Breast epithelium (tissue), 4 donors: ENCODE measurements at regions of chr11 and their contacts with region 1.

Region 1: GRCh38 chr11:65150509-65151271 is 16.4 kb upstream of the SYVN1 start:
- DNase-seq: peak; percentile 97
- H3K4me3 ChIP-seq: no peak overlapping the region
- H3K27ac ChIP-seq: peak overlapping the region; percentile 86 to 90
- H3K4me1 ChIP-seq: no peaks in the 10 kb centered on the region
- H3K27me3 ChIP-seq: no peaks in the 10 kb centered on the region
- CTCF ChIP-seq: peak in 1 of 3 donors; percentile 55
- POLR2A ChIP-seq: no peak

Region 2: DNA sequence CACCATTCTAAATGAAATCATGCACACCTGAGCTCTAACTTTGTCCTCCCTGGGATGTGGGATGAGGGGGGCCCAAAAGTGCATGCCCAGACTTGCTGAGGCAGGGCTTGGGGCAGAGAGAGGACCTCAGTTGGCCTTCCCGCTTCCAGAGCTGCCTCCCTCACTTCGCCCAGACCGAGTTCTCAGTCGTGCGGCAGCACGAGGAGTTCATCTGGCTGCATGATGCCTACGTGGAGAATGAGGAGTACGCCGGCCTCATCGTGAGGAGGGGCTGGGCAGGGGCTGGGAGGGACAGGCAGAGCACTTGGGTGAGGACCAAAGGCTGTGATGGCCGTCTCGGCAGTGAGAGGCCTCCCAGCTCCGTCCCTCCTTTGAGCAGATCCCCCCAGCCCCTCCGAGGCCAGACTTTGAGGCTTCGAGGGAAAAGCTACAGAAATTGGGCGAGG is 699.1 kb after region 1 on chr11:
- intact Hi-C with region 1: loop called (anchors 5 kb)
- DNase-seq: no peak
- H3K4me3 ChIP-seq: no peak overlapping the region
- H3K27ac ChIP-seq: no peak overlapping the region
- H3K4me1 ChIP-seq: no peaks in the 10 kb centered on the region
- H3K27me3 ChIP-seq: no peaks in the 10 kb centered on the region
- CTCF ChIP-seq: no peak
- POLR2A ChIP-seq: no peak